Common myeloid progenitor, CD34-positive (primary cell): ENCODE measurements at regions of chr11 and their contacts with region 1.

Region 1: GRCh38 chr11:75406338-75406777 is 7.0 kb downstream of the RPS3 start:
- DNase-seq: peak; percentile 65 to 87 (median 85)
- H3K4me3 ChIP-seq: no peak overlapping the region
- H3K27ac ChIP-seq: peak overlapping the region in 1 of 2 experiments; percentile 9
- H3K4me1 ChIP-seq: peaks cover 10 to 37% (median 24%) of the 10 kb centered on the region in 4 experiments
- H3K27me3 ChIP-seq: no peaks in the 10 kb centered on the region

Region 2: DNA sequence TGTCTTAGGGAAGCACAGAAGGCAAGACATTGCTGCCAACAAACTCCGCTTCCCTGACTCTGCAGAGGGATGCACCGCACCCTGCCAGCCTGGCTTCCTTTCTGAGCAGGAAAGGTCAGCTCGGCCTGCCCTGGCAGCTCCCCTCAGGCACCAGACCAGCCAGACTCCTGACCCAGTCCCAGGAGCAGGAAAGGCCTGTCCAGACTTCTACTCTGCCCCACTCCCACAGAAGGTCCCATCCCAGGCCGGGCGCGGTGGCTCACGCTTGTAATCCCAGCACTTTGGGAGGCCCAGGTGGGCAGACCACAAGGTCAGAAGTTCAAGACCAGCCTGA is 72.6 kb before region 1 on chr11:
- CTCF ChIA-PET with region 1: no interaction called
- POLR2A ChIA-PET with region 1: no interaction called
- DNase-seq: no peak
- H3K4me3 ChIP-seq: no peak overlapping the region
- H3K27ac ChIP-seq: peak overlapping the region in 1 of 2 experiments; percentile 85
- H3K4me1 ChIP-seq: peaks cover 15 to 88% (median 79%) of the 10 kb centered on the region in 4 experiments
- H3K27me3 ChIP-seq: no peaks in the 10 kb centered on the region

Region 3: GRCh38 chr11:75421035-75421602 is 14.8 kb after region 1 on chr11:
- CTCF ChIA-PET with region 1: interaction called, 20 read pairs
- POLR2A ChIA-PET with region 1: no interaction called
- DNase-seq: no peak
- H3K4me3 ChIP-seq: no peak overlapping the region
- H3K27ac ChIP-seq: no peak overlapping the region
- H3K4me1 ChIP-seq: peaks cover 0 to 5% (median 0%) of the 10 kb centered on the region in 4 experiments
- H3K27me3 ChIP-seq: no peaks in the 10 kb centered on the region

Region 4: DNA sequence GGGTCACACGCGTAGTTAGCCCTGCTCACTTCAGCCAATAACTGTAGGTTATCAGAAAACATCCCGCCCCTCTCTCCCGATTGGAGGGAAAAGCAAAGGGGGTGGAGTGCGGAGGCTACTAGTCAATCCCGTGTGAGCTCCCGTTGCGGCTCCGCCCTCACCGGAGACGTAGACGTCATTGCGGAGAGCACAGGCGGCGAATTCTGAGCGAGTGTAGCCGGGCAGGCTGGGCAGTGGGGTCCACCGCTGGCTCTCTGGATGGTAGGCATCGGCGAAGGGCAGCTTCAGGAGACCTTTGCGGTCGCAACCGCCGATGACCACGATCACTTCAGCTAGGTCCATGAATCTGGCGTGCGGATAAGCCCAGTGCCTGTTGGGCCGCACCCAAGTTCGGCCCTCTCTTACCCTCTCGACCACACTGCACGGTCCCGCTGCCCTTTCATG is 21.9 kb after region 1 on chr11:
- CTCF ChIA-PET with region 1: interaction called, 20 read pairs
- POLR2A ChIA-PET with region 1: interaction called, 3 read pairs
- DNase-seq: peak; percentile 74 to 91 (median 91)
- H3K4me3 ChIP-seq: peak overlapping the region in 2 of 7 experiments; percentile 44 to 64
- H3K27ac ChIP-seq: no peak overlapping the region
- H3K4me1 ChIP-seq: peaks cover 0 to 27% (median 13%) of the 10 kb centered on the region in 4 experiments
- H3K27me3 ChIP-seq: peaks cover 4 to 67% (median 34%) of the 10 kb centered on the region in 5 experiments

Region 5: DNA sequence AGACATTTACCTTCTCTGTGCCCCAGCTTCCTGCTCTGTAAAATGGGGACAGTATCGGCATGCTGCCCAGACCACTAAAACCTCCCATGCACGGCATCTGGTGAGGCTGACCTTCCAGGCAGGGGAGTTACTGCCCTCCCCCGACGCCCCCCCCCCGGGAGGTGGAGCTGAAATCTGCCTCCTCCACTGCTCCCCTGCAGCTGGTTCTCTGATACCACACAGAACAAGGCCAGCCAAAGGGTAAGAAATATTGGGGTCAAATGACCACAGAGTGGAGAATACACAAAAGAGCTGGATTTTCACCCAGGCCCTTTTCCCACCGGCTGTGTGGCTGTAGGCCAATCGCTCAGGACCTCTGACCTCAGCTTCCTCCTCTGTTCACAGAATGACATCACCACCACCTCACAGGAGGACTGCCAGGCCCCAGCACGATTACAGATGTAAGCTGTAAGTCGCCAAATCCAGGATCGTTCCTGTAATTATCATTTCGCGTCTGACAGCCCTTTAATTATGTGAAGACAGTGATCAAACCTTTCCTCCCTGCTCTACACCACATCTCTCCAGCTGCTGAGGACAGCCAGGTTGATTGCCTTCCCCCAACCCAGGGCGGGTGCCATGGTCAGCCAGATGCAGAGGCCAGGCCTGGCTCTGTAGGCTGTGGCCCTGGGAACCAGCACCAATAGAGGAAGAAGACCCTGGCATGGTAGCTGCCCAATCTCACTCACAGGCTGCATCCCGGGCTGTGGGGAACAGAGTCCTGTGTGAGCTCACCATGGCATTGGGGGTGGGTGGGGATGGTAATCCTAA is 62.4 kb after region 1 on chr11:
- CTCF ChIA-PET with region 1: no interaction called
- POLR2A ChIA-PET with region 1: no interaction called
- DNase-seq: no peak
- H3K4me3 ChIP-seq: no peak overlapping the region
- H3K27ac ChIP-seq: no peak overlapping the region
- H3K4me1 ChIP-seq: peaks cover 0 to 10% (median 0%) of the 10 kb centered on the region in 4 experiments
- H3K27me3 ChIP-seq: no peaks in the 10 kb centered on the region

Region 6: GRCh38 chr11:75480185-75481175 is 74.1 kb after region 1 on chr11:
- CTCF ChIA-PET with region 1: no interaction called
- POLR2A ChIA-PET with region 1: no interaction called
- DNase-seq: peak; percentile 18 to 91 (median 64)
- H3K4me3 ChIP-seq: no peak overlapping the region
- H3K27ac ChIP-seq: peak overlapping the region in 1 of 2 experiments; percentile 36
- H3K4me1 ChIP-seq: peaks cover 0 to 23% (median 7%) of the 10 kb centered on the region in 4 experiments
- H3K27me3 ChIP-seq: no peaks in the 10 kb centered on the region